ENCODE measurements at regions of chr4 and their contacts with region 1.

Region 1: DNA sequence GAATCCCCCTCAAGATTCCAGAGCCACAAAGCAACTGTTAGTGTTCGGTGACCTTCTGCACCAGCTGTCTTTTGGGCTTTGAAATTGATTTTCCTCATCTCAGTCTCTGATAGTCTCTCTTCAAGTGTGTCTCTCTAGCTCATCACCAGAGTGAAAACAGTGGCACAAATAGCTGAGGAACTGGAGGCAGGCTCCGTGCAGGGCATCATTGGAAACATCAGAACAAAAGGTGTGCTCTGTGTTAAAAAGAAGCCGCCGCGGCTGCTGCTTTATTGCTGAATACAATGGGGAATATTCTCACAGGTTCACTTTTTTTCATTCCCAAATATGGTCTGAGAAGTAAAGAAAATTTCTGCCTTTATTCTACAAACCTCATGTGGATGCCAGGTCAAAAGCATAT is 297.5 kb downstream of the DCTD start:
- DNase-seq: no peak
- H3K4me3 Mint-ChIP-seq: no peak overlapping the region
- H3K27ac Mint-ChIP-seq: no peak overlapping the region
- H3K4me1 Mint-ChIP-seq: no peaks in the 10 kb centered on the region
- H3K27me3 Mint-ChIP-seq: no peaks in the 10 kb centered on the region

Region 2: GRCh38 chr4:182113779-182114178 is 505.9 kb before region 1 on chr4:
- CTCF ChIA-PET with region 1: no interaction called
- POLR2A ChIA-PET with region 1: interaction called, 18 read pairs
- DNase-seq: no peak
- H3K4me3 Mint-ChIP-seq: no peak overlapping the region
- H3K27ac Mint-ChIP-seq: no peak overlapping the region
- H3K4me1 Mint-ChIP-seq: no peaks in the 10 kb centered on the region
- H3K27me3 Mint-ChIP-seq: no peaks in the 10 kb centered on the region

Measured in activated CD4-positive, alpha-beta T cell treated with anti-CD3 and anti-CD28 coated beads, Interleukin-2, amount 10 ng/mL, durations not matched to agents 7 days and 5 days (primary cell).